Natural killer cell (primary cell): ENCODE measurements at regions of chr15 and their contacts with region 1.

Region 1: DNA sequence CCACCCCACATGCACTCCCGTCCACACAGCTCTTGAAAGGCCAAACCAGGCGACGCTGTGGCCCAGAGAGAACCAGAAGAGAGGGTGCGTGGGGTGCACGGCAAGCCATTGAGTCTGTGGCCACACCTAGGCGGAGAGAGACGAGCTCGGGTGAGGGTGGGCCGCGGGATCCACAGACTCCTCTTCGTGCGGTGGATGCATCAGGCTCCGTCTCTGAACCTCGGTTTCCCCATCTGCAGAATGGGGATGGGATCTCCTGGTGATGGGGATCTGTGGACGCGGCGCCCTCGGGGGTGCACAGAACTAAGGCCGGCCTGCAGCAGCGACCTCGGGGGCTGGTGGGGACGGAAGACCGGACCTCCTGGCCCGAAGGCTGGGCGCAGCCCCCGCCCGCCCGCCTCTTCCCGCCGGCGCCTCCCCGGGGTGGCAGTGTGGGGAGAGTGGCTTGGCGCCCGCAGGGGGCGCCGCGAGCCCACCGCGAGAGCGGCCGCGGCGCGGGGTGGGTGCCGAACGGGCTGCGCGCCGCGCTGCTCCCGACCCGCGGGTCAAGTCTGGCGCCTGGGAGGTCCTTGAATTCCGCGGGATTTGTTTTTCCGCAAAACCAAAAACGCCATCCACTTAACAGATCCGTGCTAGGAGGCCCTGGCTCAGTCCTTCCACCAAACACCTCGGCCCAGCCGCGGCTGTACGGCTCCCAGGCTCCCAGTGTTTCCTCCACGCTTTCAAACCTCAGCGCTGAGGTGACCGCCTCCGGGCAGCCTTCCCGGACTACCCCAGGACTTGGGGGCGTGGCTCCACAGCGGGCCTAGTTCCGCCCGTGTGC is 13.2 kb upstream of the ADPGK start:
- DNase-seq: peak; percentile 59 to 73
- ATAC-seq: peak; percentile 84 to 97 (median 95)
- H3K4me3 ChIP-seq: peak overlapping the region; percentile 43
- H3K4me3 Mint-ChIP-seq: peak overlapping the region; percentile 85
- H3K27ac ChIP-seq: no peak overlapping the region
- H3K27ac Mint-ChIP-seq: peak overlapping the region in 1 of 2 donors; percentile 56
- H3K4me1 ChIP-seq: peaks cover 10% of the 10 kb centered on the region
- H3K4me1 Mint-ChIP-seq: peaks cover 10 to 15% of the 10 kb centered on the region in 2 donors
- H3K27me3 ChIP-seq: peaks cover 13% of the 10 kb centered on the region
- H3K27me3 Mint-ChIP-seq: peaks cover 24 to 41% of the 10 kb centered on the region in 2 donors
- CTCF ChIP-seq: peak; percentile 65

Region 2: GRCh38 chr15:72722071-72722696 is 74.5 kb before region 1 on chr15:
- intact Hi-C with region 1: loop called (anchors 5 kb)
- DNase-seq: peak; percentile 58 to 81
- ATAC-seq: peak; percentile 42 to 60 (median 58)
- H3K4me3 ChIP-seq: no peak overlapping the region
- H3K4me3 Mint-ChIP-seq: no peak overlapping the region
- H3K27ac ChIP-seq: no peak overlapping the region
- H3K27ac Mint-ChIP-seq: no peak overlapping the region
- H3K4me1 ChIP-seq: no peaks in the 10 kb centered on the region
- H3K4me1 Mint-ChIP-seq: no peaks in the 10 kb centered on the region
- H3K27me3 ChIP-seq: no peaks in the 10 kb centered on the region
- H3K27me3 Mint-ChIP-seq: no peaks in the 10 kb centered on the region
- CTCF ChIP-seq: peak; percentile 88

Region 3: GRCh38 chr15:72751751-72752455 is 44.8 kb before region 1 on chr15:
- intact Hi-C with region 1: no loop called
- DNase-seq: no peak
- ATAC-seq: no peak
- H3K4me3 ChIP-seq: no peak overlapping the region
- H3K4me3 Mint-ChIP-seq: no peak overlapping the region
- H3K27ac ChIP-seq: no peak overlapping the region
- H3K27ac Mint-ChIP-seq: peak overlapping the region; percentile 78
- H3K4me1 ChIP-seq: no peaks in the 10 kb centered on the region
- H3K4me1 Mint-ChIP-seq: peaks cover 17 to 20% of the 10 kb centered on the region in 2 donors
- H3K27me3 ChIP-seq: no peaks in the 10 kb centered on the region
- H3K27me3 Mint-ChIP-seq: no peaks in the 10 kb centered on the region
- CTCF ChIP-seq: no peak

Region 4: DNA sequence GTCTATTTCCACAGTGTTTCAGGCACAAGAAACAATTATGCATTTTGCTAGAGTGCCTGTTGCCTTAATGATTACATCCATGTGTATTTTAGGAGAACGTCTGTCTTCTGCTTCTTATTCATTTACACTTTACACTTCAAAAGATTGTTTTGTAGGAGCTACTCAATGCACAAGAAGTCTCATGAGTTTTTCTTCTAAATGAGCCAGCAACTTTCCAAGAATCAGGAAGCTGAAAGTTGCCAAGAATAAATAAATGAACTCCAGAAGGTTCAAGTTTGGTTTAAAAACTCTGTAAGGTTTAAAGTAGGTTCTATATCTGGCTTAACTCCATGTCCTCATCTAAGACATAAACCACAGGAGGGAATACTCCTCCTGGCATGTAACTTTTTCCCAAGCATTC is 90.7 kb after region 1 on chr15:
- intact Hi-C with region 1: no loop called
- DNase-seq: no peak
- ATAC-seq: no peak
- H3K4me3 ChIP-seq: no peak overlapping the region
- H3K4me3 Mint-ChIP-seq: no peak overlapping the region
- H3K27ac ChIP-seq: no peak overlapping the region
- H3K27ac Mint-ChIP-seq: no peak overlapping the region
- H3K4me1 ChIP-seq: no peaks in the 10 kb centered on the region
- H3K4me1 Mint-ChIP-seq: no peaks in the 10 kb centered on the region
- H3K27me3 ChIP-seq: no peaks in the 10 kb centered on the region
- H3K27me3 Mint-ChIP-seq: peaks cover 17 to 62% of the 10 kb centered on the region in 2 donors
- CTCF ChIP-seq: no peak

Region 5: GRCh38 chr15:72968531-72968922 is 171.8 kb after region 1 on chr15:
- intact Hi-C with region 1: loop called (anchors 10 kb)
- DNase-seq: peak in 1 of 2 donors; percentile 17
- ATAC-seq: no peak
- H3K4me3 ChIP-seq: no peak overlapping the region
- H3K4me3 Mint-ChIP-seq: no peak overlapping the region
- H3K27ac ChIP-seq: no peak overlapping the region
- H3K27ac Mint-ChIP-seq: peak overlapping the region; percentile 35 to 65
- H3K4me1 ChIP-seq: peaks cover 47% of the 10 kb centered on the region
- H3K4me1 Mint-ChIP-seq: peaks cover 73 to 75% of the 10 kb centered on the region in 2 donors
- H3K27me3 ChIP-seq: no peaks in the 10 kb centered on the region
- H3K27me3 Mint-ChIP-seq: no peaks in the 10 kb centered on the region
- CTCF ChIP-seq: no peak

Region 6: DNA sequence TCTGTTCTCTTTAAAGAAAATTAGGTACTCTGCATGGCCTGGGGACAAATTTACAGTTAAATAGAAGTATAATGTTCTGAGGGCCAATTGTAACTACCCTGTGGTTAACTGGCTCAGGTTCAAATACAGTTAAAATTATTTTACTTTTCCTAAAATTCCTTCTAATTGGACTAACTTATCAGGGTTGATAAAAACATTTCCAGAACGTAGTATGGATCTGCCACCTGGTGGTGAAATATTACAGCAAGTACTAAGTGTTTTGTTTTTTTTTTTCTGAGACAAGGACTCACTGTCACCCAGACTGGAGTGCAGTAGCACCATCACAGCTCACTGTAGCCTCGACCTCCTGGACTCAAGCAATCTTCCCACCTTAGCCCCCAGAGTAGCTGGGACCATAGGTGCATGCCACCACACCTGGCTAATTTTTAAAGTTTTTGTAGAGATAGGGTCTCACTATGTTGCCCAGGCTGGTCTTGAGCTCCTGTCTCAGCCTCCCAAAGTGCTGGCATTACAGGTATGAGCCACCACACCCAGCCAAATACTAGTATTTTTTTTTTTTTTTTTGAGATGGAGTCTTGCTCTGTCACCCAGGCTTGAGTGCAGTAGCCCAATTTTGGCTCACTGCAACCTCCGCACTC is 284.7 kb after region 1 on chr15:
- intact Hi-C with region 1: loop called (anchors 1 kb)
- DNase-seq: peak in 1 of 2 donors; percentile 73
- ATAC-seq: peak; percentile 54 to 65 (median 60)
- H3K4me3 ChIP-seq: no peak overlapping the region
- H3K4me3 Mint-ChIP-seq: no peak overlapping the region
- H3K27ac ChIP-seq: no peak overlapping the region
- H3K27ac Mint-ChIP-seq: no peak overlapping the region
- H3K4me1 ChIP-seq: no peaks in the 10 kb centered on the region
- H3K4me1 Mint-ChIP-seq: no peaks in the 10 kb centered on the region
- H3K27me3 ChIP-seq: peaks cover 3% of the 10 kb centered on the region
- H3K27me3 Mint-ChIP-seq: peaks cover 6 to 7% of the 10 kb centered on the region in 2 donors
- CTCF ChIP-seq: peak; percentile 79

Region 7: DNA sequence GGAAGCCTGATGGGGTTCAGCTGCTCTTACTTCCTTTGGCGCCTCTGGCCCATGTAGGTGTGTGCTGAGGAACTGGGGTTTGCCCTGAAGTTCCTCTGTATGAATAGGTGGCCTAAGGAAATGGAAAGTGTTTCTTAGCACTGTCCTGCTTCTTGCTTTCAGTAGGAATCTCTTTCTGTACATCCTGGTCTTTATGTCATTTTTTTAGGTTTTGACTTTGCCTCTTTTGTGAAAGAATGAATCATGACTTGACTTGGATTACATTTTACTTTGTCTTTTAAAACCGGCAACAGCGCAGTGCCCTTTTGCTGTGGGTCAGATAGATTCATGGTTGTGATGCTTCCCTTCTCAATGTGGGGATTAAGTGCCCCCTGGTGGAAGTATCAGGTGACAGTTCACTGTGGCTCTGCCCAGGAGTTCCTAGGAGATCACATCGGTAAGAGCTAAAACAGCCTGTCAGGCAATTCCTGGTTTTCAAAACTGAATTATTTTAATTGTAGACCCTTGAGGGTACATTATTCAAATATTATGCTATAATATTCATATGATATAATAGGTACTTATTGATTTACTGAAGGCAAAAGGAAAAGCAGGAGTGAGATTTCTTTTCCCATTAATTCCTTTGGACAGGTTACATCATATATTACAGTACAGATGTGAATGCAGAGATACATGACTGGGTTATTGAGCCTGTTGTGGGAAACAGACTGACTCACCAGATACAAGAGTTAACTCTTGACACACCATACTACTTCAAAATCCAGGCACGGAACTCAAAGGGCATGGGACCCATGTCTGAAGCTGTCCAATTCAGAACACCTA is 476.7 kb after region 1 on chr15:
- intact Hi-C with region 1: loop called (anchors 5 kb)
- DNase-seq: peak in 1 of 2 donors; percentile 69
- ATAC-seq: peak; percentile 64 to 77 (median 71)
- H3K4me3 ChIP-seq: no peak overlapping the region
- H3K4me3 Mint-ChIP-seq: no peak overlapping the region
- H3K27ac ChIP-seq: no peak overlapping the region
- H3K27ac Mint-ChIP-seq: no peak overlapping the region
- H3K4me1 ChIP-seq: no peaks in the 10 kb centered on the region
- H3K4me1 Mint-ChIP-seq: peaks cover 5% of the 10 kb centered on the region in 2 donors
- H3K27me3 ChIP-seq: no peaks in the 10 kb centered on the region
- H3K27me3 Mint-ChIP-seq: no peaks in the 10 kb centered on the region
- CTCF ChIP-seq: peak; percentile 86